ENCODE measurements at regions of chr7 and their contacts with region 1.

Region 1: GRCh38 chr7:101138213-101138870 is 11.4 kb downstream of the SERPINE1 start:
- DNase-seq: peak; percentile 87
- H3K4me3 Mint-ChIP-seq: peak overlapping the region; percentile 25
- H3K27ac Mint-ChIP-seq: peak overlapping the region; percentile 60
- H3K4me1 Mint-ChIP-seq: peaks cover 37% of the 10 kb centered on the region
- H3K27me3 Mint-ChIP-seq: peaks cover 44% of the 10 kb centered on the region

Region 2: DNA sequence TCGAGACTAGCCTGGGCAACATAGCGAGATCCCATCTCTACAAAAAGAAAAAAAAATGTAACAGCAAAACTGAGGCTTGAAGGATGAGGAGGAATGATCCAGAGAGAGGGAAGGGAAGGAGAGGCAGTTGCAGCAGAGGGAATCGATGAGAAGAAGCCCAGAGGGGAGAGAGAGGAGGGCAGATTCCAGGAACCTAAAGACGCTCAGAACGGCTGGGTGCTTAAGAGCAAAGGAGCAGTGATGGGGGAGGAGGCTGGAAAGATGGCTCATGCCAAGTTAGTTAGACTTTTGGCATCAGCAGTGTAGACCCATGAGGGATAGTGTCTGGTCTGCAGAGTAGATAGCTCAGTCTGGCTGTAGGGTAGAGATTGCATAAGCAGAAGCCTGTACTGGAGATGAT is 128.7 kb before region 1 on chr7:
- CTCF ChIA-PET with region 1: no interaction called
- POLR2A ChIA-PET with region 1: no interaction called
- DNase-seq: no peak
- H3K4me3 Mint-ChIP-seq: no peak overlapping the region
- H3K27ac Mint-ChIP-seq: no peak overlapping the region
- H3K4me1 Mint-ChIP-seq: no peaks in the 10 kb centered on the region
- H3K27me3 Mint-ChIP-seq: no peaks in the 10 kb centered on the region

Region 3: GRCh38 chr7:101085162-101085987 is 53.0 kb before region 1 on chr7 and contains the start of gene TRIM56:
- CTCF ChIA-PET with region 1: interaction called, 12 read pairs
- POLR2A ChIA-PET with region 1: interaction called, 8 read pairs
- DNase-seq: peak; percentile 86
- H3K4me3 Mint-ChIP-seq: peak within 1 kb of the TSS; percentile 97
- H3K27ac Mint-ChIP-seq: peak within 1 kb of the TSS; percentile 97
- H3K4me1 Mint-ChIP-seq: peaks cover 34% of the 10 kb centered on the region
- H3K27me3 Mint-ChIP-seq: peaks cover 5% of the 10 kb centered on the region
- total RNA-seq, gene TRIM56: 72.6 to 72.7 TPM

Region 4: DNA sequence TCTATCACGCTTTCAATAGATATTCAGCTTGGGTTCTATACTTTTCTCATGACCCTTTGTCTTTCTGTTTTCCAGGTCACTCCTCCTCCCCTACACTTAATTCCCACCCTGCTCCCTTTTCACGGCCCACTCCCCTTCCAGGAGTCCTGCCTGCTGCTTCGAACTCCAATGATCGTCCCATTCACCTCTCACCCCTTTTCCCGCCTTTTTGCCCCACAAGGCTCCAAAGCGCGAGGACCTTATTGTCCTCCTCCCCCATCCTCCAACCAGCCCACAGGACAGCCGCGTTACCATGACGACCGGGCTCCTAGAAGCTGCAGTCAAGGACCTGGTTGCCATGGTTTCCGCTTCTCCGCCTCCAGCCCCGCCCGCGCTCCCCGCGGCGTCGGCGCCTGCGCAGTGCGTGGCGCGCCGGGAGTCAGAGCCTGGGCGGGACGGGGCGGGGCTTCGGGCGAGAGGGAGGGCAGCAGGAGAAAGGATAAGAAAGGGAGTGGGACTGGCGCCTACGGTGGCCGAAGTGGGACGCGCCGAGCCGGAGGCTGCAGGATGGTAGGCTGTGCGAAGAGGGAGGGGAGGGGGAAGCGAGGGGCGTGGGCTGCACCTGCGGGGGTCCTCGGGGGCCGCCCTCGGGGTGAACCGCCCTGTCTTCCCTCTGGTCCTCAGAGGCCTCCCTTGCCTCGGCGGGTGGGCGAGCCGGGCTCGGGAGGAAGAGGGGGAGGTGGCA is 15.8 kb after region 1 on chr7 and contains the start of gene AP1S1:
- CTCF ChIA-PET with region 1: interaction called, 55 read pairs
- POLR2A ChIA-PET with region 1: interaction called, 4 read pairs
- DNase-seq: peak; percentile 95
- H3K4me3 Mint-ChIP-seq: peak within 1 kb of the TSS; percentile 79
- H3K27ac Mint-ChIP-seq: no peak within 1 kb of the TSS
- H3K4me1 Mint-ChIP-seq: peaks cover 16% of the 10 kb centered on the region
- H3K27me3 Mint-ChIP-seq: peaks cover 13% of the 10 kb centered on the region
- total RNA-seq, gene AP1S1: 46.7 to 50.0 TPM

Region 5: DNA sequence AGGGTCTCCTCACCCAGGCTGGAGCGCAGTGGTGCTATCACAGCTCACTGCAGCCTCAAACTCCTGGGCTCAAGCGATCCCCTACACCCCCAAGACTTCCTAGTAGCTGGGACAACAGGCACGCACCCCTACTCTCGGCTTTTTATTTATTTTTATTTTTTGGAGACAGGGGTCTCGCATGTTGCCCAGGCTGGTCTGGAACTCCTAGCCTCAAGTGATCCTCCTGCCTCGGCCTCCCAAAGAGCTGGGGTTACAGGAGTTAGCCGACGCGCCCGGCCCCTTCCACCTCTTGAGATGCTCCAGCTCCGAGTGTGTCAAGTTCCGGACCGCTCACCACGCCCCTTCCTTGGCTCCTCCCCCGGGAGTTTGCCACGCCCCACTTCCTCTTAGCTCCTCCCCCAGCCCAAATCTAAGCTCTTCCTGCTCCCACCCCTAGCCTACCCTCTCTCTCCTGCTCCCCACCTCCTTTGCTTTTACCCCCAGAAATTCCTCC is 35.5 kb after region 1 on chr7:
- CTCF ChIA-PET with region 1: interaction called, 50 read pairs
- POLR2A ChIA-PET with region 1: no interaction called
- DNase-seq: peak; percentile 82
- H3K4me3 Mint-ChIP-seq: peak overlapping the region; percentile 51
- H3K27ac Mint-ChIP-seq: no peak overlapping the region
- H3K4me1 Mint-ChIP-seq: peaks cover 42% of the 10 kb centered on the region
- H3K27me3 Mint-ChIP-seq: peaks cover 88% of the 10 kb centered on the region

Region 6: GRCh38 chr7:101195884-101196283 is 57.5 kb after region 1 on chr7:
- CTCF ChIA-PET with region 1: interaction called, 208 read pairs
- POLR2A ChIA-PET with region 1: interaction called, 12 read pairs
- DNase-seq: no peak
- H3K4me3 Mint-ChIP-seq: no peak overlapping the region
- H3K27ac Mint-ChIP-seq: no peak overlapping the region
- H3K4me1 Mint-ChIP-seq: peaks cover 8% of the 10 kb centered on the region
- H3K27me3 Mint-ChIP-seq: peaks cover 14% of the 10 kb centered on the region

Region 7: DNA sequence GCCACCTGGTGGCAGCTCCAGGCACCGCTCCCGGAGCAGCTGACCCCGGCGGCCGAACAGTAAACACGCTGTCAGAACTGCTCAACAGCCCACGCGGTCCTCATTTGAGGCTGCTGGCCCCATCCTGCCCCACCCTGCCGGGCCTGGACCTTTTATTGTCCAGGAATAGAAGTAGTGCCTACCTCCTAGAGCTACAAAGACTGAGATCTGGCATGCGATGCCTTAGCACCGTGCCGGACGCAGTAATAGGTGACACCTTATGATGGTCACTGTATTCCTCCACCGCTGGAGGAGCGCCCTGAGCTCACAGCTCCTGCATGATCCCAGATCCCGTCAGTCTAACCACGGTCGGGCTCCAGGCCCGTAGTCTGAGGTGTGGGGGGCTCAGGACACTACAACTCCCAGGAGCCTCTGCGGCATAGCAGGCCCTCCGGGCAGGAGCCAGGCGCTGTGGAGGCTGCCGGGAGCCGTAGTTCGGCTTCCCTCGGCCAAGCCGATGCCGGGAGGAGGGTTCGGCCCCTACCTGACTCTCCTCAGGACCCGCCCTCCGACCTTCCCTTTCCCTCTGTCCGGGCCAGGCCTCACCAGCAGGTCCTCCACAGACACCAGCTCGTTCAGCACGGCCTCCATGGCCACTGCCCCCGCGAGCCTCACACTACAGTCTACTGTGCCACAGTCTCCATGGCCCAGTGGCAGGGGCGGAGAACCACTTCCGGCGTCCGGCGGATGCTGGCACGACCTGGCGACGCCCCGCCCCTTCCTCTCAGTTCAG is 106.2 kb after region 1 on chr7 and contains the start of gene FIS1:
- CTCF ChIA-PET with region 1: interaction called, 35 read pairs
- POLR2A ChIA-PET with region 1: interaction called, 4 read pairs
- DNase-seq: peak; percentile 94
- H3K4me3 Mint-ChIP-seq: peak within 1 kb of the TSS; percentile 96
- H3K27ac Mint-ChIP-seq: peak within 1 kb of the TSS; percentile 90
- H3K4me1 Mint-ChIP-seq: peaks cover 31% of the 10 kb centered on the region
- H3K27me3 Mint-ChIP-seq: no peaks in the 10 kb centered on the region
- total RNA-seq, gene FIS1: 94.5 to 97.6 TPM